Activated CD4-positive, alpha-beta T cell treated with anti-CD3 and anti-CD28 coated beads for 36 hours (primary cell): ENCODE measurements at regions of chr1 and their contacts with region 1.

Region 1: DNA sequence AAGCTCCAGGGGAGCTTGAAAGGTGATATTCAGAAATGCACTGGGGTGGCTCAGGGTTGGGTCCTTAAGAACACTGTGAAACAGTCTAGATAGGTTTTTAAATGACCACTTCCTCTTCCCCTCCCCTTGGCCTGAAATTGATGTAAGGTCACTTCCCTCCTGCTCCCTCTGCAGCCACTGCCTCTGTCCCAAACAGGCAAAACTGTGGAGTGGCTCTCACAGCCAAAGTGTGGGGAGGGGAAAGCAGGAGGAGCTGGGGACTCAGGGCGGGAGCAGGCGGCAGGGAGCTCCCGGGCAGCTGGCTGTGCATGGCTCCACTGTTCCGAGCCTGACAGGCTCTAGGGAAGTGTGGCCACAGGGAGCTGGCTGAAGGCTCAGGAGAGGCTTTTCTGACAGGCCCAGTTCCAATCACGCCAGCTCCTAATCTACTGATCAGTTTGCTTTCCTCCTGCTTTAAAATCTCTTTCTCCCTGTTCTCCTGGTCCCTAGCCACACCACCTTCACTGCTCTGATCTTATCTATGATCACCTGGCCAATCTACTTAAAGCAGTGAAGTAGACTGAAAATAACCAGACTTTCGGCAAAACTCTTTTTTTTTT is 5.1 kb upstream of the CSRP1 start:
- DNase-seq: no peak
- ATAC-seq: no peak
- H3K4me3 Mint-ChIP-seq: no peak overlapping the region
- H3K27ac Mint-ChIP-seq: no peak overlapping the region
- H3K4me1 Mint-ChIP-seq: peaks cover 10% of the 10 kb centered on the region
- H3K27me3 Mint-ChIP-seq: no peaks in the 10 kb centered on the region

Region 2: DNA sequence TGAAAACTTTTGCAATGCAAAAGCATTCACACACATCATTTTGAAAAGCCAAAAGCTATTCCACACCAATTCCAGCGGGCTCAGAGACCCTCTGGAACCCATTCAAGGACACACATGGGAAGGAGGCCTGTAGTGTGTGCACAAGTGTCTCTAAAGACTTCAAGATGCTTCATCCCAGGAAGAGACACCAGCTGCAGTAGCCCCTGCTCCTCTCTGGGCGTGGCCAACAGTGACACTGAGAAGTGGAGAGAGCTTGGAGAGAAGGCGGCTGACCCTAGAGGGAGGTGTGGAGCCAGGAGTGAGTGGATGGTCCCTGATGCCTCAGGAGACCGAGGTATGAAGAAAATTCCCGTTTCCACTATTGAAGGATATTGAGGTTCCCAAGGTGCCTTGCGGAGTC is 75.6 kb before region 1 on chr1:
- CTCF ChIA-PET with region 1: interaction called, 27 read pairs
- POLR2A ChIA-PET with region 1: interaction called, 7 read pairs
- intact Hi-C with region 1: loop called (anchors 1 to 2 kb)
- DNase-seq: no peak
- ATAC-seq: no peak
- H3K4me3 Mint-ChIP-seq: no peak overlapping the region
- H3K27ac Mint-ChIP-seq: no peak overlapping the region
- H3K4me1 Mint-ChIP-seq: peaks cover 6% of the 10 kb centered on the region
- H3K27me3 Mint-ChIP-seq: peaks cover 8% of the 10 kb centered on the region

Region 3: GRCh38 chr1:201495471-201496295 is 16.4 kb before region 1 on chr1:
- CTCF ChIA-PET with region 1: interaction called, 216 read pairs
- POLR2A ChIA-PET with region 1: no interaction called
- intact Hi-C with region 1: no loop called
- DNase-seq: no peak
- ATAC-seq: no peak
- H3K4me3 Mint-ChIP-seq: no peak overlapping the region
- H3K27ac Mint-ChIP-seq: no peak overlapping the region
- H3K4me1 Mint-ChIP-seq: no peaks in the 10 kb centered on the region
- H3K27me3 Mint-ChIP-seq: no peaks in the 10 kb centered on the region

Region 4: GRCh38 chr1:201530741-201531531 is 18.9 kb after region 1 on chr1:
- CTCF ChIA-PET with region 1: interaction called, 24 read pairs
- POLR2A ChIA-PET with region 1: no interaction called
- intact Hi-C with region 1: no loop called
- DNase-seq: peak; percentile 76
- ATAC-seq: peak; percentile 76
- H3K4me3 Mint-ChIP-seq: no peak overlapping the region
- H3K27ac Mint-ChIP-seq: no peak overlapping the region
- H3K4me1 Mint-ChIP-seq: peaks cover 7% of the 10 kb centered on the region
- H3K27me3 Mint-ChIP-seq: peaks cover 3% of the 10 kb centered on the region

Region 5: DNA sequence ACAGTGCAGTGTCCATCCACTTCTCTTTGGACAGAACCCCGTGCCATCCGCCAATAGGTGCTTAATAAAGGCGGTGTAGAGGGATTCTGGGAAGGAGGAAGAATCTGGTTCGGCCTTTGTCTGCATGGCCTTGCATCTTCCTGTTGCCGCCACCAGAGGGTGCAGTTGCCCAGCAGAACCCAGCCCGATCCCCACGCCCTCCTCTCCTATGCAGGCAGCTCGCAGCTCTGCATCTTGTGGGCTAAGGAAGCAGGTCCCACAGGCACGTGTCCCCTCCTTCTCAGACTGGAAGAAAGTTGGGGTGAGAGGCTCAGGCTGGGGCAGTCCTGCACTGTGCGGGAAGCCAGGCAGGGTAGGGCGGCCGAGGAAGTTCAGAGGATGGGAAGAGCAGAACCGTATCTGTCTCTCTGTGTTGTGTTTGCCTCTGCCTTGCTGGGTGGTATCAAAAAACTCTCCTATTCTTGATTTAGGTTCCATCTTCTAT is 47.7 kb after region 1 on chr1:
- CTCF ChIA-PET with region 1: interaction called, 10 read pairs
- POLR2A ChIA-PET with region 1: no interaction called
- intact Hi-C with region 1: no loop called
- DNase-seq: peak; percentile 86
- ATAC-seq: peak; percentile 97
- H3K4me3 Mint-ChIP-seq: no peak overlapping the region
- H3K27ac Mint-ChIP-seq: no peak overlapping the region
- H3K4me1 Mint-ChIP-seq: peaks cover 3% of the 10 kb centered on the region
- H3K27me3 Mint-ChIP-seq: no peaks in the 10 kb centered on the region